Gastrocnemius medialis (tissue), 4 donors: ENCODE measurements at regions of chr3 and their contacts with region 1.

Region 1: GRCh38 chr3:12796171-12797123 is at the start of gene CAND2:
- DNase-seq: peak; percentile 72 to 85
- ATAC-seq: peak; percentile 14 to 28
- H3K4me3 ChIP-seq: peak within 1 kb of the TSS; percentile 70 to 88 (median 82)
- H3K27ac ChIP-seq: peak within 1 kb of the TSS; percentile 99 to 100 (median 99)
- H3K4me1 ChIP-seq: peaks cover 32 to 39% of the 10 kb centered on the region in 2 donors
- H3K27me3 ChIP-seq: no peaks in the 10 kb centered on the region
- CTCF ChIP-seq: no peak
- POLR2A ChIP-seq: peak; percentile 91 to 93
- total RNA-seq, gene CAND2: 133 to 308 (median 181) TPM

Region 2: DNA sequence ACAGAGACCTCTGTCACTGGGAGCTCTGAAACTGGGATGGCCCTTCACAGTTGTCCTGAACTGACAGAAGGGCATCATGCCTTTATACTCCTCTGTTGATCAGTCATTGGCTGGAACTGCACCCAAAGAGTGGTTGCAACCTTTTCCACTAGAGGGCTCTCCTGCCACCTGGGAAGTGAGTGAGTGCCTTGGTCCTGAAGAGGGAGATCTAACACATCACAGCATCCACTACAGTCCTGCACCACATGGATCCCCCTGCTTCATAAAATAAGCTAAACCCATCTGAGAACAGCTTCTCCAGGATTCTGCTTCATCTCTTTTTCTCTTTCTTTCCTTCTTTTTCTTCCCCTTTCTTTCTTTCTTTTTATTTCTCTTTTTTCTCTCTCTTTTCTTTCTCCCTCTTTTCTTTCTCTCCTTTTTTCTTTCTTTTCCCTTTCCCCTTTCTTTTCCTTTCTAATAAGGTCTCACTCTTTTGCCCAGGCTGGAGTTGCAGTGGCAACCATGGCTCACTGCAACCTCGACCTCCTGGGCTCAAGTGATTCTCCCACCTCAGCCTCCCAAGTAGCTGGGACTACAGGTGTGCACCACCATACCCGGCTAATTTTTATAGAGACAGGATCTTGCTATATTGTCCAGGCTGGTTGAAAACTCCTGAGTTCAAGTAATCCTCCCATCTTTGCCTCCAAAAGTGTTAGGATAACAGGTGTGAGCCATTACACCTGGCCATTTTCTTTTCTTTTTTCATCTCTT is 89.8 kb before region 1 on chr3:
- in situ Hi-C with region 1: no loop called
- intact Hi-C with region 1: loop called (anchors 2 kb)
- DNase-seq: peak; percentile 36 to 76
- ATAC-seq: peak; percentile 78 to 89
- H3K4me3 ChIP-seq: no peak overlapping the region
- H3K27ac ChIP-seq: peak overlapping the region in 2 of 4 donors; percentile 21 to 49
- H3K4me1 ChIP-seq: peaks cover 11 to 27% of the 10 kb centered on the region in 2 donors
- H3K27me3 ChIP-seq: no peaks in the 10 kb centered on the region
- CTCF ChIP-seq: peak; percentile 38 to 76 (median 64)
- POLR2A ChIP-seq: no peak